ENCODE measurements at regions of chr5 and their contacts with region 1.

Region 1: GRCh38 chr5:177588413-177588909 is 3.5 kb upstream of the TMED9 start:
- DNase-seq: no peak
- H3K27ac ChIP-seq: no peak overlapping the region
- CTCF ChIP-seq: no peak

Region 2: DNA sequence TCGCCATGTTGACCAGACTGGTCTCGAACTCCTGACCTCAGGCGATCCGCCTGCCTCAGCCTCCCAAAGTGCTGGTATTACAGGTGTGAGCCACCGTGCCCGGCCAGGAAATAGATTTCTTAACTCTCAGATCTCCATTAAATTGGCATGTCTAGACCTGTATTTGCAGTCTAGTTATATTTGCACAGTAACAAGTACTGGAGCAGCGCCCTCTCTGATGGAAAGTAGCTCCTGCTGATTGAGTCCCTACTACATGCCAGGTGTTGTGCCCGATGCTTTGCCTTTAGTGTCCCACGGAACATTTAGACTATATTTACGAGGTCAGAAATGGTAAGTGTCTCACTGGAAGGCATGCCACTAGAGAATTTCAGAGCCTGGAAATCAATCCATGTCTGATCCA is 12.3 kb before region 1 on chr5:
- CTCF ChIA-PET with region 1: no interaction called
- POLR2A ChIA-PET with region 1: interaction called, 11 read pairs
- DNase-seq: no peak
- H3K27ac ChIP-seq: no peak overlapping the region
- CTCF ChIP-seq: no peak

Region 3: GRCh38 chr5:178994580-178995340 is 1406.3 kb after region 1 on chr5 and contains the start of gene GRM6:
- CTCF ChIA-PET with region 1: no interaction called
- POLR2A ChIA-PET with region 1: no interaction called
- DNase-seq: no peak
- H3K27ac ChIP-seq: no peak within 1 kb of the TSS
- CTCF ChIP-seq: no peak